HAP-1 (cell line): ENCODE measurements at regions of chr9 and their contacts with region 1.

Region 1: GRCh38 chr9:104556830-104557634 is 11.9 kb upstream of the OR13C8 start:
- DNase-seq: peak in 1 of 2 experiments; percentile 23
- H3K4me3 ChIP-seq: no peak overlapping the region
- H3K4me1 ChIP-seq: peaks cover 4% of the 10 kb centered on the region
- H3K27me3 ChIP-seq: no peaks in the 10 kb centered on the region

Region 2: GRCh38 chr9:104658496-104659195 is 101.6 kb after region 1 on chr9:
- in situ Hi-C with region 1: loop called (anchors 25 kb)
- DNase-seq: no peak
- H3K4me3 ChIP-seq: no peak overlapping the region
- H3K4me1 ChIP-seq: peaks cover 9% of the 10 kb centered on the region
- H3K27me3 ChIP-seq: no peaks in the 10 kb centered on the region